Panc1 (cell line): ENCODE measurements at regions of chr11 and their contacts with region 1.

Region 1: DNA sequence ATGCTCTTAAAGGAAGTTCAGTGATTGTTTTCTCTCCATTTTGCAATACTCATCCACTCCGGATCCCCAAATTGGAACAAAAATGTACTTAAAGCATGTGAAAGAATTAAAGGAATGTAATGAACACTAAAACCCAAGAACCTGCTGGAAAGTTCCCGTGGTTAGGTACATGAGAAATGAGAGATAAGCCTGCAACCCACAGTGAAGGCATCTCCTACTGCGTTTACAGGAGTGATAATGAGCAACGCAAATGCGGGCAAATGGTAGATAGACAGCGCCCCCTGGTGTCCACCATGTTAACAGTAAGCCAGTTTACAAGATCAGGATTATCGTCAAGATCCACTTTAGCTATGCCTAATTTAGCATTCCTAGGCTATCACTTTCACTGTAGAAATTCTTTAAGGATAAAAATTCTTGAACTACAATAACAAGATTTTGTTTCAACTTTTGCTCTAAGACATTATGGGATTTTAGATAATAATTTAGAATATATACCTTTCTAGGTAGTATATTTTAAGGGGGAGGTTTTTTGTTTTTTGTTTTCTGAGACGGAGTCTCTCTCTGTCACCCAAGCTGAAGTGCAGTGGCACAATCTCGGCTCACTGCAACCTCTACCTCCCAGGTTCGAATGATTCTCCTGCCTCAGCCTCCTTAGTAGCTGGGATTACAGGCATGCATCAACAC is 29.9 kb downstream of the ALG9 start:
- DNase-seq: peak; percentile 67
- ATAC-seq: peak; percentile 99
- H3K4me3 ChIP-seq: no peak overlapping the region
- H3K27ac ChIP-seq: no peak overlapping the region
- H3K4me1 ChIP-seq: peaks cover 3% of the 10 kb centered on the region; the same call in 1 of the 2 replicates
- H3K27me3 ChIP-seq: no peaks in the 10 kb centered on the region
- CTCF ChIP-seq: peak; percentile 95

Region 2: DNA sequence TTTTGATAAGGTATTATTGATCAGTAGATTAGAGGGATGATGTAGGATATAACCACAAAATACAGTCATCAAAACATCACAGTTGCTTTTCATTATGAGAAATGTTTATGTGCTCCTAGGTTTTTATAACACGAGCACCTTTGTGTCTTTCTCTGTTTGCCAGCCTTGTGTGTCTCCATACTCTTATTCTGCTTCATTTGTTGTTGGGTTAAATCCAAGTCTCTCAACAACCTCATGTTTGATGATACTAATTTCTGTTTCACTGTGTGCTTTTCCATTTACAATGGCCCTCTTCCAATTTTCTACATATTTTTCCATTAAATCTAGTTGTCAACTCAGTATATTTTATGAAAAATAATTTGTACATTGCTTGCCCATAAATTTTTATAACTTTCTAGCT is 703.7 kb before region 1 on chr11:
- CTCF ChIA-PET with region 1: no interaction called
- POLR2A ChIA-PET with region 1: no interaction called
- in situ Hi-C with region 1: no loop called
- intact Hi-C with region 1: no loop called
- DNase-seq: no peak
- ATAC-seq: no peak
- H3K4me3 ChIP-seq: no peak overlapping the region
- H3K27ac ChIP-seq: no peak overlapping the region
- H3K4me1 ChIP-seq: no peaks in the 10 kb centered on the region
- H3K27me3 ChIP-seq: peaks cover 2% of the 10 kb centered on the region
- CTCF ChIP-seq: no peak

Region 3: GRCh38 chr11:111565114-111565720 is 276.3 kb before region 1 on chr11:
- CTCF ChIA-PET with region 1: no interaction called
- POLR2A ChIA-PET with region 1: no interaction called
- in situ Hi-C with region 1: no loop called
- intact Hi-C with region 1: loop called (anchors 1 kb)
- DNase-seq: peak; percentile 80
- ATAC-seq: peak; percentile 46
- H3K4me3 ChIP-seq: no peak overlapping the region
- H3K27ac ChIP-seq: peak overlapping the region; percentile 57; the same call in 1 of the 2 replicates
- H3K4me1 ChIP-seq: peaks cover 3% of the 10 kb centered on the region; the same call in 1 of the 2 replicates
- H3K27me3 ChIP-seq: no peaks in the 10 kb centered on the region
- CTCF ChIP-seq: peak; percentile 92

Region 4: GRCh38 chr11:111586388-111586831 is 255.1 kb before region 1 on chr11:
- CTCF ChIA-PET with region 1: interaction called, 3 read pairs
- POLR2A ChIA-PET with region 1: no interaction called
- in situ Hi-C with region 1: no loop called
- intact Hi-C with region 1: loop called (anchors 1 kb)
- DNase-seq: peak; percentile 42
- ATAC-seq: peak; percentile 87
- H3K4me3 ChIP-seq: no peak overlapping the region
- H3K27ac ChIP-seq: no peak overlapping the region
- H3K4me1 ChIP-seq: no peaks in the 10 kb centered on the region
- H3K27me3 ChIP-seq: no peaks in the 10 kb centered on the region
- CTCF ChIP-seq: peak; percentile 77; the same call in 1 of the 2 replicates

Region 5: GRCh38 chr11:111601979-111602864 is 239.3 kb before region 1 on chr11 and contains the start of gene SIK2:
- CTCF ChIA-PET with region 1: interaction called, 5 read pairs
- POLR2A ChIA-PET with region 1: no interaction called
- in situ Hi-C with region 1: no loop called
- intact Hi-C with region 1: loop called (anchors 5 kb)
- DNase-seq: peak; percentile 64
- ATAC-seq: peak; percentile 93
- H3K4me3 ChIP-seq: peak within 1 kb of the TSS; percentile 71 to 78
- H3K27ac ChIP-seq: peak within 1 kb of the TSS; percentile 67
- H3K4me1 ChIP-seq: peaks cover 25% of the 10 kb centered on the region
- H3K27me3 ChIP-seq: no peaks in the 10 kb centered on the region
- CTCF ChIP-seq: peak; percentile 98
- total RNA-seq, gene SIK2: 17.0 TPM